Right ventricle myocardium superior (tissue), 1 donor: ENCODE measurements at regions of chr2 and their contacts with region 1.

Region 1: DNA sequence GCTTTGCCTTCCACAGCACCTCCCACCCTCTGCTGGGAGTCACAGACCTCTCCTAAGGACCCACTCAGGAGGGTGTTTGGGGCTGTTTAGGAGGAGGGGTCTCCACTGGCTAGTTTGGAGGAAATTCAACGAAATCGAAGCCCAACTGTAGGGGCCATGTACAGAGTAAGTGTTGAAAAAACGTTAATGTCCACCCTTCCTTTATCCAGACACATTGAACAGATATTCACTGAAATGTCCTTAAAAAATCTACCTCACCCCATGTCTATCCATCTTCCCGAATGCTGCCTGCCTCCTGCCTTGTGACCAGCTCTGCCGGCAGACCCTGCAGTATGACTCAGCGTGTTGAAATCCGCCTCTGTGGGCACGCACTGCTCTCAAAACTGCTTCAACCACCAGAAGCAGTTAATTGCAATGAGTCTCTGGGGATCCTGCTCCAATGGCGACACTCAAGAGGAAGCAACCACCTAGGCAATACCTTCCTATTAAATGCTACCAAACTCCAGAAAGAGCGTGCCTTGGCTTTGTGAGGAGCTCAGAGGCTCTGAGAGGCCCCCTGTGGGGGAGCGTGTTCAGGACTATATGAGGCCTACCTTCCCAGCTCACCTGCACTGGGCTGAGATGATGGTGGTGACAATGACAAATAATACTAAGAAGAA is 61.4 kb upstream of the RTN4 start:
- DNase-seq: peak; percentile 68
- ATAC-seq: peak; percentile 63

Region 2: GRCh38 chr2:55159037-55159651 is 47.4 kb after region 1 on chr2:
- intact Hi-C with region 1: loop called (anchors 5 kb)
- DNase-seq: peak; percentile 80
- ATAC-seq: peak; percentile 72